ENCODE measurements at regions of chr12 and their contacts with region 1.

Region 1: DNA sequence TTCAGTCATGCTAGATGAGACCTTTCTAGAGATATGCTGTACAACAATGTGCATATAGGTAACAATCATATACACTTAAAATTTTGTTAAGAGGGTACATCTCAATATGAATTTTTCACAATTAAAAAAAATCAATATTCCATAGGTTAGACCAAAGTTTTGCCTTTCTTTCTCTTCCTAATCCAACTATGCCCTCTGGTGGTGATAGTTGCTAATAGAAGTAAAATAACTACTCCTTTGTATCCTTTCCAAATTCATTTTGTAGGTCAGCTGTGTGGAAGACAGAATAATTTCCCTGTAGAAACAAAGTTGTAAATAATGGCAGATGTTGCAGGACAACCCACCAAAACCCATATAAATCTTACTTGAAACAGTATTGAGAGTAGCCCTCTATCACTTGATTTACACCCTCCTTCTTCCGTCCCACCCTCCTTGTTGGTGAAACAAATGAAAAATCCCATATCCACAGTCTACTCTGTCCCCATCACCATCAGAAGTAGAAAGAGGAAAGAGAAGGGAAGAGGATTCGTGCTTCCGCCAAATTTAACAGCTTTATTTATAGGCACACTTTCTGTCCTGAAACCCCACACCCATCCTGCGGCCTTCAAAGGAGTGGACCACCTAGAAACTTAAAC is 34.2 kb upstream of the KICS2 start:
- DNase-seq: peak in 4 of 5 donors; percentile 41 to 56 (median 51)
- H3K4me3 ChIP-seq: no peak overlapping the region
- H3K4me3 Mint-ChIP-seq: no peak overlapping the region
- H3K27ac ChIP-seq: no peak overlapping the region
- H3K27ac Mint-ChIP-seq: no peak overlapping the region
- H3K4me1 ChIP-seq: no peaks in the 10 kb centered on the region
- H3K4me1 Mint-ChIP-seq: peaks cover 0 to 9% (median under 1%) of the 10 kb centered on the region in 4 donors
- H3K27me3 ChIP-seq: no peaks in the 10 kb centered on the region
- H3K27me3 Mint-ChIP-seq: no peaks in the 10 kb centered on the region

Region 2: DNA sequence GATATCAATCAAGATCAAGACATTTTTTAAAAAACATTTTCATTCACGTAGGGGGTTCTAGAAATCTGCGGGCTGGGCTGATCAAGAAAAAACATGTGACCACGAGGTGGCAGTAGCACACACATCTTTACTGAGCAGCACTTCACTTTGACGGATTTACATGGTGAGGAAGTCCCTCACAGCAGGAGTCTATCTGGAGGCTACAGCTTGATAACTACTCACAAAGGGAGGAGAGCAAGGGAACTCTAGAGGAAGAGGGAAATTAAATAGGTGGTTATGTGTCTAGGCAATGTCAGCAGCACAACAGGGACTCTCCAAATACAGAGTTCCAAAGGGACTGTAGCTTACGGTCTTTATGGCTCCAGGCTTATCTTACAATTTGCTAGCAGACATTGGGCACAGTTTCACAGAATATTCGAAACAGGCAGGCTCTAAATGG is 836.1 kb before region 1 on chr12:
- CTCF ChIA-PET with region 1: no interaction called
- POLR2A ChIA-PET with region 1: no interaction called
- intact Hi-C with region 1: loop called (anchors 5 kb)
- DNase-seq: peak in 4 of 5 donors; percentile 1 to 24 (median 4)
- H3K4me3 ChIP-seq: no peak overlapping the region
- H3K4me3 Mint-ChIP-seq: no peak overlapping the region
- H3K27ac ChIP-seq: no peak overlapping the region
- H3K27ac Mint-ChIP-seq: no peak overlapping the region
- H3K4me1 ChIP-seq: no peaks in the 10 kb centered on the region
- H3K4me1 Mint-ChIP-seq: no peaks in the 10 kb centered on the region
- H3K27me3 ChIP-seq: no peaks in the 10 kb centered on the region
- H3K27me3 Mint-ChIP-seq: peaks cover 1 to 2% of the 10 kb centered on the region in 2 donors

Region 3: DNA sequence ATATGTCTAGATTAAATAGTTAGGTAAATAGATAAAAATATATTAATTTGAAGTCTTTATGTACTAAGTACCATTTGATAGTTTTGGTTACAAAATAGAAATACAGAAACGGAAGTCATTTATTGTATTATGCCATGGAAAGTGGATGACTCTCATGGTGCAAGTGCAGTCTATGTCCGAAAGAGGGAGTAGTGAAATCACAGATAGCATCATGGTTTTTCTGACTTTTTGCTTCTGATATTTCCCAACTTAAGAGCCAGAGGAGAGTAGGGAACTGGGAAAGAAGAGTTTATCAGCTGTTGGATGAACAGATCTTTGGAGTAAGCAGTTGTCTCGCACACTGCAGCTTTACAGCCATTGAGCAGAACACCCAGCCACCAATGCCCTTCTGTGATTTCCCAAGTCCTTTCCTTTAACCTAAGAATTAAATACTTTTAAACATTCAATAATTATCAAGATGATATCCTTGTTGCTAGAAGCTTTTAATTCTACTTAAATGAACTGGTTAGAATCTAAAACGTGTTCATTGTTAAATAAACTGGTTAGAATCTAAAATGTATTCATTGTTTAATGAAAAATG is 430.2 kb before region 1 on chr12:
- CTCF ChIA-PET with region 1: interaction called, 4 read pairs
- POLR2A ChIA-PET with region 1: no interaction called
- intact Hi-C with region 1: loop called (anchors 1 kb)
- DNase-seq: peak in 1 of 5 donors; percentile 8
- H3K4me3 ChIP-seq: no peak overlapping the region
- H3K4me3 Mint-ChIP-seq: no peak overlapping the region
- H3K27ac ChIP-seq: no peak overlapping the region
- H3K27ac Mint-ChIP-seq: no peak overlapping the region
- H3K4me1 ChIP-seq: no peaks in the 10 kb centered on the region
- H3K4me1 Mint-ChIP-seq: peaks cover 0 to 6% (median 3%) of the 10 kb centered on the region in 4 donors
- H3K27me3 ChIP-seq: no peaks in the 10 kb centered on the region
- H3K27me3 Mint-ChIP-seq: peaks cover 9 to 17% of the 10 kb centered on the region in 2 donors

Region 4: DNA sequence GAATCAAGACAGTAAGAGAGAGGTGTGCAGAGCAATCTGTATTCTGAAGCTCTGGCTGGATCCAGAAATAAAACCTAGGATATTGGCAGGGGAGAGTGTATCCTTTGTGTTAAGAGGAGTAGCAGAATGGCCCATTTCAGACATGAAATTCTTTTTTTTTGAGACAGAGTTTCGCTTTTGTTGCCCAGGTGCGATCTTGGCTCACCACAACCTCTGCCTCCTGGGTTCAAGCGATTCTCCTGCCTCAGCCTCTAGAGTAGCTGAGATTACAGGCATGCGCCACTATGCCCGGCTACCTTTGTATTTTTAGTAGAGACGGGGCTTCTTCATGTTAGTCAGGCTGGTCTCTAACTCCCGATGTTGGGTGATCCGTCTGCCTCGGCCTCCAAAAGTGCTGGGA is 417.9 kb before region 1 on chr12:
- CTCF ChIA-PET with region 1: interaction called, 24 read pairs
- POLR2A ChIA-PET with region 1: no interaction called
- intact Hi-C with region 1: loop called (anchors 1 kb)
- DNase-seq: no peak
- H3K4me3 ChIP-seq: no peak overlapping the region
- H3K4me3 Mint-ChIP-seq: no peak overlapping the region
- H3K27ac ChIP-seq: no peak overlapping the region
- H3K27ac Mint-ChIP-seq: no peak overlapping the region
- H3K4me1 ChIP-seq: peaks cover 3% of the 10 kb centered on the region
- H3K4me1 Mint-ChIP-seq: peaks cover 3 to 5% (median 4%) of the 10 kb centered on the region in 4 donors
- H3K27me3 ChIP-seq: no peaks in the 10 kb centered on the region
- H3K27me3 Mint-ChIP-seq: peaks cover 6 to 9% of the 10 kb centered on the region in 2 donors

Region 5: DNA sequence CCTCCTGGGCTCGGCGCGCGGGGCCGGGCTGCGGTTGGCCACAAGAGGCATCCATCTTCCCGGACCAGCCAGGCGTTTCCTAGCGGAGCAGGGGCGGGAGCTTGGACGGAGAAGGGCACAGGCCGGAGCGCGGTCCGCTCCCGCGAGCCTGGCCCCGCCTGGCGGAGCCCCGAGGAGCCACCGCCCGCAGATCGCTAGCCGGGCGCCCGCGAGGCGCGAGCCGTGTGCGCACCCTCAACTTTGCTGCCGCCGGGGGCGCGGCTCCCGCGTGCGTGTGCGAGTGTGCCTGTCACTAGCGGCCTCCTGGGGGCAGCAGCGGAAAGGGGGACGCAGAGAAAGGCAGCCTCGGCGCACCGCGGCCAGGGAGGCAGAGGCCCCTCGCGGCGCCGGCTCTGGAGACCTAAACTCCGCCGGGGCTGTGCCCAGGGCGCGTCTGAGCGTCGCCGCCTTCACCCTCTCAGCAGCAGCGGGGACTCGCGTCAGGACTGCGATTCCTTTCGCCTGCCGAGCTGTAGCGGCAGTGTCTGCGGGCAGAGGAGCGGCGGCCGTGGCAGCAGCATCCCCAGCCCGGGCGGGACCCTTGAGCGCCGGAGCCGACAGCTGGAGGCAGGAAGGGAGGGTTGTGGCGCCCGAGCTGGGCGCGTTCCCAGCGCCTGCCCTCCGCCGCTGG is 412.4 kb before region 1 on chr12:
- CTCF ChIA-PET with region 1: interaction called, 24 read pairs
- POLR2A ChIA-PET with region 1: interaction called, 4 read pairs
- intact Hi-C with region 1: loop called (anchors 1 kb)
- DNase-seq: peak; percentile 61 to 76 (median 73)
- H3K4me3 ChIP-seq: peak overlapping the region; percentile 49 to 66
- H3K4me3 Mint-ChIP-seq: peak overlapping the region in 7 of 8 donors; percentile 35 to 81 (median 67)
- H3K27ac ChIP-seq: no peak overlapping the region
- H3K27ac Mint-ChIP-seq: no peak overlapping the region
- H3K4me1 ChIP-seq: peaks cover 15% of the 10 kb centered on the region
- H3K4me1 Mint-ChIP-seq: peaks cover 7 to 13% (median 10%) of the 10 kb centered on the region in 4 donors
- H3K27me3 ChIP-seq: no peaks in the 10 kb centered on the region
- H3K27me3 Mint-ChIP-seq: peaks cover 14 to 26% of the 10 kb centered on the region in 2 donors

Region 6: DNA sequence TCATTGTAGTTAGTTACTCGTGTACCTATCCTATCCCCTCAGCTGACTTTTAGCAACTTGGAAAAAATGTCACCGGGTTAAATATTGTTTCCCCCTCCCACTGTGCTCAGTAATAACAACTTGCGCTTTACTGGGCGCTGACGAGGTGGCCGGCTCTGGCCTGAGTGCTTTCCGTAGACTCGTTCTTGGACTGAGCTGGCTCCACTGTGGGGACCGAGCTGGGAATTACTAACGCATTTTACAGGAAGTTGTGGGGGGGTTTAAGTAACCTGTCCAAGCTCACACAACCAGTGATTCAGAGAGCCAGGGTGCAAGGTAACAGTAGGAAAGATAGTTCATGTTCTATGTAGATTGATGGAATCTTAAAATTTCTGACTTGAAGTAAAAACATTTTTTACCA is 48.3 kb after region 1 on chr12:
- CTCF ChIA-PET with region 1: no interaction called
- POLR2A ChIA-PET with region 1: no interaction called
- intact Hi-C with region 1: no loop called
- DNase-seq: no peak
- H3K4me3 ChIP-seq: no peak overlapping the region
- H3K4me3 Mint-ChIP-seq: no peak overlapping the region
- H3K27ac ChIP-seq: no peak overlapping the region
- H3K27ac Mint-ChIP-seq: no peak overlapping the region
- H3K4me1 ChIP-seq: no peaks in the 10 kb centered on the region
- H3K4me1 Mint-ChIP-seq: no peaks in the 10 kb centered on the region
- H3K27me3 ChIP-seq: no peaks in the 10 kb centered on the region
- H3K27me3 Mint-ChIP-seq: peaks cover 2 to 4% of the 10 kb centered on the region in 2 donors

Region 7: GRCh38 chr12:64318605-64319004 is 62.3 kb after region 1 on chr12:
- CTCF ChIA-PET with region 1: no interaction called
- POLR2A ChIA-PET with region 1: no interaction called
- intact Hi-C with region 1: no loop called
- DNase-seq: no peak
- H3K4me3 ChIP-seq: no peak overlapping the region
- H3K4me3 Mint-ChIP-seq: no peak overlapping the region
- H3K27ac ChIP-seq: no peak overlapping the region
- H3K27ac Mint-ChIP-seq: peak overlapping the region in 2 of 7 donors; percentile 27 to 68
- H3K4me1 ChIP-seq: no peaks in the 10 kb centered on the region
- H3K4me1 Mint-ChIP-seq: no peaks in the 10 kb centered on the region
- H3K27me3 ChIP-seq: no peaks in the 10 kb centered on the region
- H3K27me3 Mint-ChIP-seq: peaks cover 2% of the 10 kb centered on the region in 2 donors

Region 8: DNA sequence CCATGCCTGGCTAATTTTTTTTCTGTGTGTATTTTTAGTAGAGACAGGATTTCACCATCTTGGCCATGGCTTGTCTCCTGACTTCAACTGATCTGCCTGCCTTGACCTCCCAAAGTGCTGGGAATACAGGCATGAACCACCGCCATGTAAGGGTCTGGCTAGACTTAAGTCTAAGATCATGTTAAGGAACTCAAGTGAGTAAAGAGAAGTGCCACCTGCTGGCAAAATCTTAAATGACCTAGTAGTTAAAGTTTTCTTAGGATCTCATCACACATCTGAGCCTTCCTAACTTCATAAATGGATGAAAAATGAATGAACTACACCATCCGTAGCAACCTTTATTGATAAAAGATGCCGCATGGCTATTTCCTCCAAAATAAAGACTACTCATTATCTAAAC is 135.9 kb after region 1 on chr12:
- CTCF ChIA-PET with region 1: no interaction called
- POLR2A ChIA-PET with region 1: no interaction called
- intact Hi-C with region 1: loop called (anchors 1 kb)
- DNase-seq: peak in 2 of 5 donors; percentile 26 to 29
- H3K4me3 ChIP-seq: no peak overlapping the region
- H3K4me3 Mint-ChIP-seq: peak overlapping the region in 4 of 8 donors; percentile 20 to 62 (median 42)
- H3K27ac ChIP-seq: no peak overlapping the region
- H3K27ac Mint-ChIP-seq: no peak overlapping the region
- H3K4me1 ChIP-seq: peaks cover 14% of the 10 kb centered on the region
- H3K4me1 Mint-ChIP-seq: peaks cover 6 to 14% (median 11%) of the 10 kb centered on the region in 4 donors
- H3K27me3 ChIP-seq: no peaks in the 10 kb centered on the region
- H3K27me3 Mint-ChIP-seq: no peaks in the 10 kb centered on the region

Measured in CD4-positive, alpha-beta memory T cell (primary cell).